ENCODE measurements at regions of chr11 and their contacts with region 1.

Region 1: GRCh38 chr11:4072668-4073285 is 21.8 kb upstream of the RRM1 start:
- DNase-seq: peak; percentile 68
- ATAC-seq: peak; percentile 71
- H3K4me3 Mint-ChIP-seq: no peak overlapping the region
- H3K27ac Mint-ChIP-seq: no peak overlapping the region
- H3K4me1 Mint-ChIP-seq: peaks cover 25% of the 10 kb centered on the region
- H3K27me3 Mint-ChIP-seq: no peaks in the 10 kb centered on the region

Region 2: GRCh38 chr11:3807909-3808860 is 264.6 kb before region 1 on chr11 and contains the start of gene PGAP2:
- CTCF ChIA-PET with region 1: interaction called, 48 read pairs
- POLR2A ChIA-PET with region 1: interaction called, 4 read pairs
- DNase-seq: peak; percentile 64
- ATAC-seq: peak; percentile 87
- H3K4me3 Mint-ChIP-seq: peak within 1 kb of the TSS; percentile 93
- H3K27ac Mint-ChIP-seq: peak within 1 kb of the TSS; percentile 85
- H3K4me1 Mint-ChIP-seq: peaks cover 21% of the 10 kb centered on the region
- H3K27me3 Mint-ChIP-seq: no peaks in the 10 kb centered on the region
- total RNA-seq, gene PGAP2: 23.8 to 25.7 TPM

Region 3: GRCh38 chr11:3867209-3868091 is 205.3 kb before region 1 on chr11:
- CTCF ChIA-PET with region 1: interaction called, 630 read pairs
- POLR2A ChIA-PET with region 1: no interaction called
- DNase-seq: no peak
- ATAC-seq: no peak
- H3K4me3 Mint-ChIP-seq: no peak overlapping the region
- H3K27ac Mint-ChIP-seq: peak overlapping the region; percentile 48
- H3K4me1 Mint-ChIP-seq: peaks cover 87% of the 10 kb centered on the region
- H3K27me3 Mint-ChIP-seq: no peaks in the 10 kb centered on the region

Region 4: GRCh38 chr11:3939211-3939610 is 133.6 kb before region 1 on chr11:
- CTCF ChIA-PET with region 1: interaction called, 59 read pairs
- POLR2A ChIA-PET with region 1: no interaction called
- DNase-seq: no peak
- ATAC-seq: no peak
- H3K4me3 Mint-ChIP-seq: no peak overlapping the region
- H3K27ac Mint-ChIP-seq: no peak overlapping the region
- H3K4me1 Mint-ChIP-seq: peaks cover 83% of the 10 kb centered on the region
- H3K27me3 Mint-ChIP-seq: no peaks in the 10 kb centered on the region

Region 5: GRCh38 chr11:3984896-3985295 is 87.9 kb before region 1 on chr11:
- CTCF ChIA-PET with region 1: interaction called, 24 read pairs
- POLR2A ChIA-PET with region 1: interaction called, 3 read pairs
- DNase-seq: peak; percentile 64
- ATAC-seq: peak; percentile 70
- H3K4me3 Mint-ChIP-seq: no peak overlapping the region
- H3K27ac Mint-ChIP-seq: peak overlapping the region; percentile 9
- H3K4me1 Mint-ChIP-seq: peaks cover 82% of the 10 kb centered on the region
- H3K27me3 Mint-ChIP-seq: no peaks in the 10 kb centered on the region

Region 6: DNA sequence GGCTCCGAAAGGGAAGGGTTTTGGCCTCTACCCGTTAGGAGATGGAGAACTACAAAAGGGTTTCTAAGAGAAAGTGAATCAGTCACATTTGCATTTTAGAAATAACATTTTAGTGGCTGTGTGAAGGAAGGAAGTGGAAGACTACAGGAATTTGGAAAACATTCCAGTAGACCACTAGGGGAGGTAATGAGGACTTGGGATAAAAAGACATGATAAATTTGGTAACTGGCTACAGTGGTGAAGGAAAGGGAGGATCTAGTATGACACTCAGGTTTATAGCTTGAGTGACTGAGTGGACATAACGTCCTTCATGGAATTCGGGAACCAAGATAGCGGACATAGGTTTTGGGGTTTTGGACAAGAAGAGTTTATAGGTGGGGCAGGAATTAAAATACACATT is 14.8 kb after region 1 on chr11:
- CTCF ChIA-PET with region 1: interaction called, 59 read pairs
- POLR2A ChIA-PET with region 1: interaction called, 3 read pairs
- DNase-seq: no peak
- ATAC-seq: no peak
- H3K4me3 Mint-ChIP-seq: no peak overlapping the region
- H3K27ac Mint-ChIP-seq: peak overlapping the region; percentile 31
- H3K4me1 Mint-ChIP-seq: peaks cover 57% of the 10 kb centered on the region
- H3K27me3 Mint-ChIP-seq: no peaks in the 10 kb centered on the region

Measured in activated CD8-positive, alpha-beta T cell treated with anti-CD3 and anti-CD28 coated beads, Interleukin-2, amount 10 ng/mL, durations not matched to agents 7 days and 5 days (primary cell).